Activated CD8-positive, alpha-beta T cell treated with anti-CD3 and anti-CD28 coated beads, Interleukin-2, amount 10 ng/mL, durations not matched to agents 7 days and 5 days (primary cell): ENCODE measurements at regions of chr14 and their contacts with region 1.

Region 1: DNA sequence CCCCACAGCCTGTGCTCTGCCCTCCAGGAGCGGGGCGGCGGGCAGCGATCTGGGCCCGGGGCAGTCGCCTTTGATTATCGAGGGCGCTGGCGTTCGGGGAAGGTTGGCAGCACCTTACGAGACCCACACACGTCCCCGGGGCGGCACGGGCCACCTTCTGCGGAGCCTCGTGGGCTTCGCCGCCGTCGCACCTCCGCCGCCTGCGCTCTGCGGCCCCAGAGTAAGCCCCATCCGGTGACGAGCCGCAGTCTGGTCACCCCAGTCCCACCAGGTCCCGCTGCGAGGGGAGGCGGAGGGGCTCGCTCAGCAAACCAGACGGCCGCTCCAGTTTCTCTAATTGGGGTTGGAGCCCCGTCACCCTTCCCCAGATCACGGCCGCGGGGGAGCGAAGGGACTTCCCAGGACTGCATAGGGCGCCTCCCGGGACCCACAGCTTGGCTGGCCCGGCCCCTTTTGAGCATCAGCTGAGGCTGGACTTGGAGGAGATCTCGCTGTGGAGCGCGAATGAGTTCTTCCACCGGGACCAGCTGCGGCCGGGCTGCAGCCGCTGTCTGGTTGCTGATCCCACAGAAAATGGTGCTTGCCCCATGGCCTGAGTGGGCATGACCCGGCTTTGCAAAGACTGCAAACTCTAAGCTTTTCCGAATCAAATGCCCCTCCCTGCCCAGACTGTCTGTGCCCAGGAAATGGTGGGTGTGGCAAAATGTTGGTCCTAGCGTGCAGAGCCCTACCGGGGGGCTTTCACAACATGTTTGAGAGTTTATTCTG is 560 bp downstream of the LGALS3 start:
- DNase-seq: peak; percentile 58
- ATAC-seq: peak; percentile 77
- H3K4me3 Mint-ChIP-seq: peak overlapping the region; percentile 78
- H3K27ac Mint-ChIP-seq: peak overlapping the region; percentile 43
- H3K4me1 Mint-ChIP-seq: peaks cover 54% of the 10 kb centered on the region
- H3K27me3 Mint-ChIP-seq: peaks cover 17% of the 10 kb centered on the region

Region 2: DNA sequence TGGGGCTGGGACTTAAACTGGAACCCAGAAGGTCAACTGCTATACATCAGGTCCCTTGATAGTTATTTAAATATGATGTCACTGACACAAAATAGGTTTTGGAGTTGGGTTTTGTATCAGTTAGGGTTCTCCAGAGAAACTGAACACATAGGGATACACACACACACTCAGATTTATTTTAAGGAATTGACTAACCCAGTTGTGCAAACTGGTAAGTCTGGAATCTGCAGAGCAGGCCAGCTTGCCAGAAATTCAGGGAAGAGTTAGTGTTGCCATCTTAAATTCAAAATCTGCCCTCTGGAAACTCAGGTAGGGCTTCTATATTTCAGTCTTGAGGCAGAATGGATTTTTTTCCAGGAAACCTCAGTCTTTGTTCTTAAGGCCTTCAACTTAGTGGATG is 41.3 kb before region 1 on chr14:
- CTCF ChIA-PET with region 1: interaction called, 21 read pairs
- POLR2A ChIA-PET with region 1: no interaction called
- DNase-seq: no peak
- ATAC-seq: no peak
- H3K4me3 Mint-ChIP-seq: no peak overlapping the region
- H3K27ac Mint-ChIP-seq: no peak overlapping the region
- H3K4me1 Mint-ChIP-seq: peaks cover 27% of the 10 kb centered on the region
- H3K27me3 Mint-ChIP-seq: peaks cover 4% of the 10 kb centered on the region

Region 3: DNA sequence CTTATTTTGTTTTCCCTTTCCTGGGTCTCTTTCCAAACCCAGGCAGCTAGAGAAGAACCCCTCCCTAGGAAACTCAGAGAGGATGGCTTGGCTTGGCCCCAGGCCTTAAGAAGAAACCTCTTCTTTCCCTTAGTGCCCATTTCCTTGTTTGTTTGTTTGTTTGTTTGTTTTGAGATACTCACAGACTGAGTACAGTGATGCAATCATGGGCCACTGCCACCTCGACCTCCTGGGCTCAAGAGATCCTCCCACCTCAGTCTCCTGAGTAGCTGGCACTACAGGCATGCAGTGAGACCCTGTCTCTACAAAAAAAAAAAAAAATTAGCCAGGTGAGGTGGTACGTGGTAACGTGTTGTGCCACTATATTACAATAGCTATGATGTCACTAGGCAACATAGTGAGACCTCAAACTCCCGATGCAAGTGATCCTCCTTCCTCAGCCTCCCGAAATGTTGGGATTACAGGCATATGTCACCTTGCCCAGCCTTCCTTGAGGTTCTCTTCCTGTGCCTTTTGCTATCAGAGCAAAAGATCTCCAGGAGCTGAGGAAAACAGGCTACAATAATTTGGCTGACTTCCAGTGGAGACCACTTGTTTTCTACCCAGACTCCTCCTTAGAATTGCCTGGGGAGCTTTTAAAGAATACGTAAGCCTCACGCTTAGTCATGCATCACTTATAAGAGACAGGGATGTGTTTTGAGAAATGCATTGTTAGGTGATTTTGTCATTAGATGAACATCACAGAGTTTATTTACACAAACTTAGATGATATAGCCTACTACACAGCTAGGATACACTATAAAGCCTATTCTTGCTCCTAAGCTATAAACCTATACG is 35.1 kb before region 1 on chr14:
- CTCF ChIA-PET with region 1: interaction called, 21 read pairs
- POLR2A ChIA-PET with region 1: interaction called, 4 read pairs
- DNase-seq: no peak
- ATAC-seq: no peak
- H3K4me3 Mint-ChIP-seq: no peak overlapping the region
- H3K27ac Mint-ChIP-seq: no peak overlapping the region
- H3K4me1 Mint-ChIP-seq: peaks cover 47% of the 10 kb centered on the region
- H3K27me3 Mint-ChIP-seq: no peaks in the 10 kb centered on the region

Region 4: GRCh38 chr14:55102141-55102621 is 27.4 kb before region 1 on chr14:
- CTCF ChIA-PET with region 1: interaction called, 26 read pairs
- POLR2A ChIA-PET with region 1: interaction called, 10 read pairs
- DNase-seq: peak; percentile 76
- ATAC-seq: peak; percentile 62
- H3K4me3 Mint-ChIP-seq: peak overlapping the region; percentile 68
- H3K27ac Mint-ChIP-seq: peak overlapping the region; percentile 98
- H3K4me1 Mint-ChIP-seq: peaks cover 70% of the 10 kb centered on the region
- H3K27me3 Mint-ChIP-seq: no peaks in the 10 kb centered on the region

Region 5: DNA sequence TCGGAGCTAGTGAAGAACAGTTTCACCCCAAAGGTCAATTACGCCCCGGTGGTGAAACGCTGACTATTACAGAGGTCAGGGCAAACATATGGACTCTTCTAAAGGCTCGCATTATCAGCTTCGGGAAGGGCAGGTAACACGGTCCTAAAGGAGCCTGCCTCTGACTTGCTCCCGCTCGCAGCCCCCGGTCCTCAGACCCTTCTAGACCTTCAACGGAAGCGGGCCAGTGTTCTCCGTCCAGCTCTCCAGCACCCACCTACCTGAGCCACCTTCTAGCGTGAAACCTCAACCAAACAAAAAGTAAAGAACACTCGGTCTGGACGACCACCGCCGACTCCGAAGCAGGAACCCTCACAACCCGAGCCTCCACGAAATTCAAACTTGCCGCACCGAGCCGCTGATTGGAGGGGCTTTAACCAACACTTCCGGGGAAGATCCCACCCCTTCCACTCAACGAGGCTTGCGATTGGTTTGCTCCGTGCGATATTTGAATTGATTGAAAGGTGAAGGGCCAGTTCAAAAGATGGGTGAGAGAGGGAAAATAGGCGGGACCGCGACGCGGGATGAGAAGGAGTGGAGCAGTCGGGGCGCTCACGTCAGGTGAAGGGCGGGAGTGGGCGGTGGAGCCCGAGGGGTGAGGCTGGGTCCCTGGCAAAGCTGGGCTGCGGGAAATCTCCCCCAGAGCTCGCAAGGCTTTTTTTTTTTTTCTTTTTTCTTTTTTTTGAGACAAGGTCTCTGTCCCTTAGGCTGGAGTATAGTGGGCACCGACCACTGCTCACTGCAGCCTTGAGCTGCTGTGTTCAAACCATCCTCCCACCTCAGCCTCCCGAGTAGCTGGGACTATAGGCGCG is 61.8 kb after region 1 on chr14 and contains the start of gene DLGAP5:
- CTCF ChIA-PET with region 1: no interaction called
- POLR2A ChIA-PET with region 1: no interaction called
- DNase-seq: peak; percentile 97
- ATAC-seq: peak; percentile 99
- H3K4me3 Mint-ChIP-seq: peak within 1 kb of the TSS; percentile 98
- H3K27ac Mint-ChIP-seq: peak within 1 kb of the TSS; percentile 97
- H3K4me1 Mint-ChIP-seq: peaks cover 36% of the 10 kb centered on the region
- H3K27me3 Mint-ChIP-seq: peaks cover 4% of the 10 kb centered on the region
- total RNA-seq, gene DLGAP5: 110 to 112 TPM